Mucosa of descending colon (tissue), 3 donors: ENCODE measurements at regions of chr1 and their contacts with region 1.

Region 1: GRCh38 chr1:22131875-22132486 is 10.9 kb downstream of the WNT4 start:
- DNase-seq: peak in 2 of 3 donors; percentile 60 to 77
- ATAC-seq: peak; percentile 67
- H3K4me3 ChIP-seq: no peak overlapping the region
- H3K4me1 ChIP-seq: no peaks in the 10 kb centered on the region
- CTCF ChIP-seq: peak; percentile 66

Region 2: GRCh38 chr1:21966247-21967000 is 165.6 kb before region 1 on chr1:
- intact Hi-C with region 1: no loop called
- DNase-seq: no peak
- ATAC-seq: no peak
- H3K4me3 ChIP-seq: no peak overlapping the region
- H3K4me1 ChIP-seq: peaks cover 3% of the 10 kb centered on the region
- CTCF ChIP-seq: no peak

Region 3: DNA sequence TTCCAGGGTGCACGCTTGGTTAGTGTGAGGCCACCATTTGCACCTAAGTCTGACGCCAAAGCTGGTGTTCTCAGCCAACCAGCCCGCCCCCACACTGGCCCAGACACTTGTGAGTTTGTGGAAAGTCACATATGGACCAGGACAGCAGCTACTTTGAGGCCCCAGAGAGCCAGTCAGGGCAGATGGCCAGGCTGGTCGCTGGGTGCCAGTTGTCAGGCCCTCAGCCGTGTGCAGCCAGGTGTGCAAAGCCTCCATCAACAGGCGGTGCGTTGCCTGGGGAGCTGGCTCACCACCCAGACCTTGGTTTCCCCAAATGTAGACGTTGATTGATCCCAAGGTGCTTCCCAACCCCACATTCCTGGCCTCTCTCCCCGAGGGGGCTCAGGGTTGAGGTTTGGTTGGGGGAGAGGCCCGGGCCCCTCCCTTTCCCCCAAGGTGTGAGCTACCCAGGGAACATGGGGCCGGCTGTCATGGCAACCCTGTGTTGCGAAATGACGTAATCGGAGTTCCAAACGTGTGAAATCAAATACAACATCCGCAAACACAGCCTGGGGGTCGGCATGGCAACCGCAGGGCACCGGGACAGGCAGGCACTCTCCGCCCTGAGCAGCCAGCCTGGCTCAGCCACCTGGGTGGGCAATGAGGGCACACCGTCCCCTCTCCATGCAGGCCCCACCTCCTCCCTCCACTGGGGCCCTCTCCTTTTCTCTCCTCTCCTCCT is 53.1 kb after region 1 on chr1:
- intact Hi-C with region 1: no loop called
- DNase-seq: no peak
- ATAC-seq: peak; percentile 18
- H3K4me3 ChIP-seq: no peak overlapping the region
- H3K4me1 ChIP-seq: no peaks in the 10 kb centered on the region
- CTCF ChIP-seq: no peak

Region 4: GRCh38 chr1:22264464-22265341 is 132.7 kb after region 1 on chr1:
- intact Hi-C with region 1: no loop called
- DNase-seq: no peak
- ATAC-seq: no peak
- H3K4me3 ChIP-seq: no peak overlapping the region
- H3K4me1 ChIP-seq: peaks cover 12% of the 10 kb centered on the region
- CTCF ChIP-seq: no peak

Region 5: GRCh38 chr1:22275721-22276395 is 143.9 kb after region 1 on chr1:
- intact Hi-C with region 1: loop called in 1 of 2 experiments (anchors 10 kb)
- DNase-seq: peak in 2 of 3 donors; percentile 81 to 82
- ATAC-seq: peak; percentile 92
- H3K4me3 ChIP-seq: no peak overlapping the region
- H3K4me1 ChIP-seq: no peaks in the 10 kb centered on the region
- CTCF ChIP-seq: peak; percentile 85

Region 6: GRCh38 chr1:22416555-22417454 is 284.8 kb after region 1 on chr1:
- intact Hi-C with region 1: loop called in 1 of 2 experiments (anchors 5 kb)
- DNase-seq: peak; percentile 69 to 86 (median 80)
- ATAC-seq: peak; percentile 81
- H3K4me3 ChIP-seq: no peak overlapping the region
- H3K4me1 ChIP-seq: peaks cover 6% of the 10 kb centered on the region
- CTCF ChIP-seq: peak; percentile 85